ENCODE measurements at regions of chr20 and their contacts with region 1.

Region 1: DNA sequence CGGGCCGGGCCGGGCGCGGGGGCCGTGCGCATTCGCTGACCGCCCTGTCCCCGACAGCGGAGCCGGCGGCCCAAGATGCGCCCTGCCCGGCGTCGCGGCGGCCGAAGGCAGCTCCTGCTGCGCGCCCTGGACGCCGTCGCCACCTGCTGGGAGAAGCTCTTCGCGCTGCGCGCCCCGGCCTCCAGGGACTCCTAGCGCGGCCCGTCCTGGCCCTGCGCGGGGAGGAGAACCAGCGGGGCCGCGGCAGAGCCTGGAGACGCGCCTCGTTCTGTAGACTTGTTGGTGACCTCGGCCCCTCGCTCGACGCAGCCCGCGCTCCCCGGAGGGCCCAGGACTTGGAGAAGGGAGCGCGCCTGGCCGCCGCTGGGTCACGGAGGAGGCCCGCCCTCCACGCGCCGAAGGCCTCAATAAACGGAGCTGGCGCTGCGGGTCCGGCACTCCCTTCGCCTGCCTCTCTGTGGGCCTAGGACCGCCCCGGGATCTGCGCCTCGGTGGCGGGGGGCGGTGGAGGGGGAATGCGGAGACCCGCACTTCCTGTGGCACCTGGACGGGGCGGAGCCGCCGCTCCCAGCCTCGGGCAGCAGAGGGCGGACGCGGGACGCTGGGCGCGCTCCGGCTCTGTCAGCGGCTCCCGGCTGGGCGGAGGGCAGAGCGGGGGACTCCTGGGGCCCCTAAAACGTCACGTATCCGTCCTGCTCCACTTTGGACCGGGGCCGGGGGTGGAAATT is 2.7 kb downstream of the C20orf204 start:
- DNase-seq: peak; percentile 57 to 91 (median 78)
- ATAC-seq: peak; percentile 78
- H3K4me3 ChIP-seq: peak overlapping the region; percentile 45 to 76
- H3K4me3 Mint-ChIP-seq: peak overlapping the region; percentile 78
- H3K27ac ChIP-seq: peak overlapping the region in 1 of 2 experiments; percentile 45
- H3K27ac Mint-ChIP-seq: no peak overlapping the region
- H3K4me1 ChIP-seq: peaks cover 75% of the 10 kb centered on the region
- H3K4me1 Mint-ChIP-seq: peaks cover 39% of the 10 kb centered on the region
- H3K27me3 ChIP-seq: peaks cover 0 to 3% of the 10 kb centered on the region in 2 experiments
- H3K27me3 Mint-ChIP-seq: no peaks in the 10 kb centered on the region
- CTCF ChIP-seq: peak; percentile 67

Region 2: GRCh38 chr20:63434599-63435378 is 603.9 kb before region 1 on chr20:
- CTCF ChIA-PET with region 1: no interaction called
- POLR2A ChIA-PET with region 1: no interaction called
- intact Hi-C with region 1: no loop called
- DNase-seq: peak; percentile 55 to 88 (median 76)
- ATAC-seq: peak; percentile 85
- H3K4me3 ChIP-seq: peak overlapping the region in 1 of 2 experiments; percentile 6
- H3K4me3 Mint-ChIP-seq: peak overlapping the region; percentile 44
- H3K27ac ChIP-seq: peak overlapping the region; percentile 11 to 21
- H3K27ac Mint-ChIP-seq: peak overlapping the region; percentile 79
- H3K4me1 ChIP-seq: peaks cover 8% of the 10 kb centered on the region
- H3K4me1 Mint-ChIP-seq: peaks cover 12% of the 10 kb centered on the region
- H3K27me3 ChIP-seq: no peaks in the 10 kb centered on the region
- H3K27me3 Mint-ChIP-seq: peaks cover 2% of the 10 kb centered on the region
- CTCF ChIP-seq: peak; percentile 92

Region 3: GRCh38 chr20:64053841-64054661 is 15.3 kb after region 1 on chr20:
- CTCF ChIA-PET with region 1: interaction called, 62 read pairs
- POLR2A ChIA-PET with region 1: interaction called, 3 read pairs
- intact Hi-C with region 1: loop called (anchors 1 kb)
- DNase-seq: no peak
- ATAC-seq: no peak
- H3K4me3 ChIP-seq: no peak overlapping the region
- H3K4me3 Mint-ChIP-seq: no peak overlapping the region
- H3K27ac ChIP-seq: no peak overlapping the region
- H3K27ac Mint-ChIP-seq: no peak overlapping the region
- H3K4me1 ChIP-seq: peaks cover 11% of the 10 kb centered on the region
- H3K4me1 Mint-ChIP-seq: peaks cover 6% of the 10 kb centered on the region
- H3K27me3 ChIP-seq: peaks cover 20 to 31% of the 10 kb centered on the region in 2 experiments
- H3K27me3 Mint-ChIP-seq: peaks cover 23% of the 10 kb centered on the region
- CTCF ChIP-seq: no peak

Region 4: DNA sequence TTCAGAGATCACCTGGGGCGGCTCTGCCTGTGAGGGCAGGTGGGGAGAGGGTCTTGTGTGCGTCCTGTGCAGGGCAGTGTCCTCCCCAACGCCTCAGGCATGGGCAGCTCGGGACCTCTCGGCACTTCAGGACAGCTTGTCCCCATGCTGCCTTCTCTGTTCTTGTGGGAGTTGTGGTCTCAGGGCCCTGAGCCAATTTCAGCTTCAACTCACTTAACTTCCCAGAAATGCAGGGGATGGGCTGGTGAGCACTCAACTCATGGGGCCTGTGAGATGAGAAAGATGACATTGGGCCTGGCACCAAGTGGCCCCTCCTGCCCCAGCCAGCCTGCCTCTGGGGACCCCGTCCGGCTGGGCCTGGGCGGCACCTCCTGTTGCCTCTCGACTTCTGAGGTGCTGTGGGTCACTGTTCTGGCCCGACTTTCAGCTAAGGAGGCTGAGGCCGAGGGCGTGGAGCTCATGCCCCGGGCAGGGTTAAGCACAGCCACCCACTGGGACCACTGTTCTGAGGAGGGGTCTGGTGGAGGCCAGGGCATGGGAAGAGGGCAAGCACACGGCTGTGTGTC is 33.9 kb after region 1 on chr20:
- CTCF ChIA-PET with region 1: interaction called, 14 read pairs
- POLR2A ChIA-PET with region 1: no interaction called
- intact Hi-C with region 1: no loop called
- DNase-seq: no peak
- ATAC-seq: no peak
- H3K4me3 ChIP-seq: no peak overlapping the region
- H3K4me3 Mint-ChIP-seq: no peak overlapping the region
- H3K27ac ChIP-seq: no peak overlapping the region
- H3K27ac Mint-ChIP-seq: peak overlapping the region; percentile 27
- H3K4me1 ChIP-seq: peaks cover 21% of the 10 kb centered on the region
- H3K4me1 Mint-ChIP-seq: peaks cover 5% of the 10 kb centered on the region
- H3K27me3 ChIP-seq: no peaks in the 10 kb centered on the region
- H3K27me3 Mint-ChIP-seq: no peaks in the 10 kb centered on the region
- CTCF ChIP-seq: no peak

Region 5: DNA sequence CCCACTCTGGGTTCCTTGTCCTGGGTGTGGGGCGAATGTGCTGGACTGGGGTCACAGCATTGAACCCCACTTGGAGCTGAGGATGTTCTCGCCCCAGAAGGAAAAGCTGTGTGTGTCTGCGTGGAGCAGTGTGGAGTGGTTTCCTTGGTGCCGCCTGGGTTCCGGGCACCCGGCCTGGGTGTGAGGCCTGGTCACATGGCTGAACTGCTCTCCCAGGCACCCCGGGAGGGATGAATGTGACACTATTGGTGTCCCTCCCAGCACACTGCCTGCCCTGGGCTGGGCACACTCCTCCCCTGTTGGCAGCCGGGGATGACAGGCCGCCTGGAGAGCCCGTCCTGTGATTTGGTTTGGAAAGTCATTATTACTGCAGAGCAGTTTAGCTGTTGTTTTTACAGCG is 137.8 kb after region 1 on chr20:
- CTCF ChIA-PET with region 1: no interaction called
- POLR2A ChIA-PET with region 1: no interaction called
- intact Hi-C with region 1: no loop called
- DNase-seq: no peak
- ATAC-seq: no peak
- H3K4me3 ChIP-seq: no peak overlapping the region
- H3K4me3 Mint-ChIP-seq: no peak overlapping the region
- H3K27ac ChIP-seq: no peak overlapping the region
- H3K27ac Mint-ChIP-seq: no peak overlapping the region
- H3K4me1 ChIP-seq: peaks cover 2% of the 10 kb centered on the region
- H3K4me1 Mint-ChIP-seq: peaks cover 12% of the 10 kb centered on the region
- H3K27me3 ChIP-seq: peaks cover 0 to 3% of the 10 kb centered on the region in 2 experiments
- H3K27me3 Mint-ChIP-seq: peaks cover 15% of the 10 kb centered on the region
- CTCF ChIP-seq: no peak